GM10248 (cell line): ENCODE measurements at regions of chr1 and their contacts with region 1.

Region 1: DNA sequence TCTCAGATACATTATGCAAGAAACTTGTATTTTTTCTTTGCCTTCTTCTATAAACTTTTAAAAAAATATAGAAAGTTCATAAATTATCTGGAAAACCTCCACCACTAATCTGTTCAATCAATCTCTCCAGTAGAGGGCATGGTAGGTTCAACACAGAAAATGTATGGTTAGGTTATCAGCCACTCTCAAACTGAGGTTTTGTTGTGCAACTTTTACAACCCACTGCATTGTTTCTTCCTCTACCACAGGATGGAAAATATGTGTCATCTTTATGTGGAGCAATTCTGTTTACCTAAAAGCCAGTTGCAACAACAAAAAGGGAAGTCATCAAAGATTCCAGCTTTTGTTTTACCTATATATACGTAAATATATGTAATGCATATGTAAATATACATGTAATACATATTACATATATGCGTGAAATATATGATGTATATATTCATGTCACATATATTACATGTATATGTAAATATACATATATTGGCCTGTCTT is 3.0 kb upstream of the RGS2 start:
- DNase-seq: peak; percentile 59
- CTCF ChIP-seq: peak; percentile 62

Region 2: DNA sequence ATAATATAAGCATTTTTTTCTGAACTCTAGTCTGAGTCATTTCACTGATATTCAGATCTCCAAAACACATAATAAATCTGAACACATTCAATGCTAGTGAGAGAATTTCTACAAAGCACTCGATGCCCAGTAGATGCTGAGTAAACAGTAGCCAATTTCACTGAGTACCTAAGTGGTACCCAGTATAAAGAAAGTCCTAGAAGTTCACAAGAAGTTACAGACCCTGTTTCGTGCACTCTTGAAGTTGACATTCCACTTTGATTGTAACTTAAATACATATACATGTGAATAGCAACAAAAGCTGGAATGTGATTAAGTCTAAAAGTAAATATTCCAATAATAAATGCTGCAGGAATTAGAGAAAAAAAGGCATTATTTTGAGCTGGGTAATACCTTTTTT is 30.2 kb before region 1 on chr1:
- CTCF ChIA-PET with region 1: no interaction called
- POLR2A ChIA-PET with region 1: no interaction called
- DNase-seq: no peak
- CTCF ChIP-seq: no peak

Region 3: DNA sequence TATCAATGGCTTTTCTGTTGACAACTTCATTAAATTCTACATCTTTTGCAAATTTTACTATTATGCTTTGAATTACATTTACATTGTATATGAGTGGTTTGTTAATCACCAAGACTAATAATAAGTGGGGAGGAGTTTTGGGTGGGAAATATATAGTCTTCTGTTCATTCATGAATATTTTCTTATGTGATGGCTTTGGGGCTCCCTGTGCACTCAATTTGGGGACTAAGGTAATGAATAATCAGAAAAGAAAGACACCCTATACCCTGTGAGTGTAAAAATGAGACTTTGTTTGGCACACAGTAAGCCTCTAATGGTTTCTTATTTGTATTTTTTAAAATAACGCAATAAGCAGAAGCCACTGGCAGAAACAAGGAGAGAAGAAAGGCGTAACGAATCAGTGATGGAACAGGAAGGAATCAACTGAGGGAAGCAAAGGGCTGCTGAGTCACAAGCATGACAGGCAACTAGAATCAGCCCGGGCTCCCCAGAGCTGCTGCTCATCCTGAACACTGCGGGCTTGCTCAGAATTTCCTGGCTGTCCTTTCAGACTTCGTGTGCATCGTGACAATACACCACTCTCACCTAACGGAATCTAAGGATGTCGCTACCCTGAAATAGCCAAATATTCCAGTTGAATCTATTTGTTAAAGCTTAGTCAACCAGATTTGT is 17.8 kb before region 1 on chr1:
- CTCF ChIA-PET with region 1: interaction called, 17 read pairs
- POLR2A ChIA-PET with region 1: no interaction called
- DNase-seq: no peak
- CTCF ChIP-seq: no peak

Region 4: DNA sequence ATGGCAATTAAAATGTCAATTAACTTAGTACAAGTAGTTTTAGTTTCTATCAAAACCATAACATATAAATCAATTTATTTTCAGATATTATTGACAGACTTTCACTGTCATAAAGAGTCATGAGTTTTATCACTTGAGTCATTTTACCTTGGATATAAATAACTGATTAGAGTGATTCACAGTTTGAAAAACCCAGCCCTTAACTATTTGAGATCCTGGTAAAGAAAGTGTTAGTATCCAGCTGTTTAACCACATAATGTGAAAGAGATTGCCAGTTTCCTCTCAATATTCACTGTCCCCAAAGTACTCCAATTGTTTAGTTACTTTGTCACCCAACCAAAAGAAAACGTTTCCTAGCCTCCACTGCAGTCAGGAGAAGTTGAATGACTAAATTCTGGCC is 162.0 kb after region 1 on chr1:
- CTCF ChIA-PET with region 1: no interaction called
- POLR2A ChIA-PET with region 1: no interaction called
- DNase-seq: no peak
- CTCF ChIP-seq: no peak

Region 5: DNA sequence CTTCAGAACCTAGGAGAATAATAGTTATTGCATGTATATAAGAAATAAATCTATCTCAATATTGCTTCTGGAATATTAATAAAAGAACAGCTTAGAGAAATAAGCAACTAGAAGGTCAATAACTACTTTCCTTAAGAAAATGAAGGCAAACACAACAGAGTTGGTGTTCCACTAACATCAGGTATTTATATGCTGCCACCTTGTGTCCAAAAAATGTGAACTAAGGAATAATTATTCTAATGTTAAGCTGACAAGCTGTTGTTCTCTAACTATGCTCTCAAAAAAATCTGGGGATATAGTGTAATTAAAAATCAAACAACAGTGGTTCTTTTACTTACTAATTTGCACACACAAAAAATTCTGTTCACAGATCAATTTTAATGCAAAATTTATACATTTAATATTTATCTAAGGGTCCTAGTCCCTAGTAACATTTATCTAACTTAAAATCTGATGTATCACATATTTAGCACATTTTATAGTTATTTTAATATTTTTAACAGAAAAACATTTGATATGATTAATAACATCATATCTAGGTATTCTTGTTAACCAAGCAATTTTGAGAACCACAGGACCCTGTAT is 213.7 kb after region 1 on chr1:
- CTCF ChIA-PET with region 1: interaction called, 59 read pairs
- POLR2A ChIA-PET with region 1: no interaction called
- DNase-seq: peak; percentile 11
- CTCF ChIP-seq: peak; percentile 32

Region 6: GRCh38 chr1:193025218-193025617 is 219.3 kb after region 1 on chr1:
- CTCF ChIA-PET with region 1: interaction called, 59 read pairs
- POLR2A ChIA-PET with region 1: no interaction called
- DNase-seq: no peak
- CTCF ChIP-seq: no peak

Region 7: DNA sequence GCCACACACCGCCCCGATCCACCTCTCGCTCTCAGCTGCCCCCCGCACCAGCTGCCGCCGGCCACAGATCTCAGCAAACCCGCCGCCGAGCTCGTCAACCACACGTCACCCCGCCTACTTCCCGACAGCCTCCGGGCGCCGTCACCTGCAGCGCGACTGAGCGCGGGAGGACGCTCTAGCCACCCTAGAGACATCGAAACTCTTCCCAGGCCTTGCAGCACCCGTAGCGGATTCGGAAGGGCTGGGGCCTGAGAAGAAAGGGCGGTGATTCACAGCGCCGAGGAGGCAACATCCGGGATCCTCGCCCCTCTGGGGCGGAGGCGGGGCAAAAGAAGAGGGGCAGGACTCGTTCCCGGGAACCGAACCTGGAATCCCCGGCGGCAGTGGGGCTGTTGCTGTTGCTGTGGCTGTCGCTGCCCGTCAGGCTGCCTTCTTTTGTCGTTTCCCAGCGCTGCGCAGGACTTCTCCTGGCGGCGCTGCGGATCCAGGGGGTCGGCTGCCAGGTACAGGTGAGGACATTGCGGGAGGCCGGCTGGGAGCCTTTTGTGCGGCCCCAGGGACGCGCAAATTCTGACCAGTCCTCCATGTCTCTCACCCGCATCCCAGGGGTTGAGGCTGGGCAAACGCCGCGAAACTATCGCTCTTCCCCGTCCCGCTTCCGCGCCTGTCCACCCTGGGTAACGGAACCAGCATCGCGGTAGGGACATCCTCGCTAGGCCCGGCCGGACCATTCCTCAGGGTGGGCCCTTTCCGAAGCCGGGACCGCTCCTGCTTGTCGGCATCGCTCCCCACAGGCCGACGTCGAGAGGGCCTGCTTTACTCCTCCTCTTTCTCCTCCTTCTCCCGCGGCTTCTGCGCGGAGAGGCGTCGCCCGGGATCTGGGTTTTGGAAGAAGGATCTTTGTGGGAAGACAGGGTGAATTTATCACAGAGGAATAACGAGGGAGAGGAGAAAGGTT is 253.7 kb after region 1 on chr1 and contains the starts of genes RO60 and UCHL5:
- CTCF ChIA-PET with region 1: interaction called, 10 read pairs
- POLR2A ChIA-PET with region 1: interaction called, 6 read pairs
- DNase-seq: peak; percentile 93
- CTCF ChIP-seq: peak; percentile 21